Adrenal gland (tissue), 19 donors: ENCODE measurements at regions of chr7 and their contacts with region 1.

Region 1: DNA sequence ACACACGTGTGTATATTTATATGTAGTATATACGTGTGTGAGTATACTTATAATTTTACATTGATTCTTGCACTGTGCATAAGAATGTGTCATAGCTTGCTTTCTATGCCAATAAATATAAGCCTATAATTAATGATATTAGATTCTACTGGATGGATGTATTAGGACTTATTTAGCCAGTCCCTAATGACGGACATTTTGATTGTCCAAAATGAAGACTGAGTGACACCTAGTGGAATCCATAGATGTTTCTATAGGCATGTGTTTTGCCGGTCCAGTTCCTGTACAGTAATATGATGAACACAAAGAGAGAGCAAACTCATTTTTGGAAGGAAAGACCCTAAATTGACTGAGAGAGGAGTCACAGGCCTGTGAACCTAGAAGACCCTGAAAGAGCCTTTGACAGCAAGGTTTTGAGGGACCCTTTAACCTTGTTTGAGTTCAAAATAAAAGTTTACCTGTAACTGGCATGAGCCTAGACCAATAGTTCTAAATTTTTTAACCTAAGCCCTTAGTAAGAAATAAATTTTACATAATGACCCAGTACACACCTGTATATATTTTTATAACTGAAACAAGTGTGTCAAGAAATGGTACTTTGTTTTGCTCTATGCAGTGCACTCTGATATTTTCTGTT is 42.4 kb upstream of the AGBL3 start:
- DNase-seq: no peak
- H3K4me3 ChIP-seq: no peak overlapping the region
- H3K27ac ChIP-seq: no peak overlapping the region
- H3K4me1 ChIP-seq: no peaks in the 10 kb centered on the region
- H3K27me3 ChIP-seq: no peaks in the 10 kb centered on the region
- CTCF ChIP-seq: peak in 3 of 6 experiments; percentile 18 to 26 (median 20)
- POLR2A ChIP-seq: no peak

Region 2: GRCh38 chr7:134766779-134767519 is 176.9 kb before region 1 on chr7:
- intact Hi-C with region 1: loop called in 1 of 2 experiments (anchors 10 kb)
- DNase-seq: no peak
- H3K4me3 ChIP-seq: no peak overlapping the region
- H3K27ac ChIP-seq: peak overlapping the region in 3 of 5 donors; percentile 24 to 84 (median 61)
- H3K4me1 ChIP-seq: no peaks in the 10 kb centered on the region
- H3K27me3 ChIP-seq: no peaks in the 10 kb centered on the region
- CTCF ChIP-seq: no peak
- POLR2A ChIP-seq: no peak

Region 3: GRCh38 chr7:134782121-134782623 is 161.7 kb before region 1 on chr7:
- intact Hi-C with region 1: no loop called
- DNase-seq: no peak
- H3K4me3 ChIP-seq: peak overlapping the region in 1 of 4 donors; percentile 58
- H3K27ac ChIP-seq: peak overlapping the region in 3 of 5 donors; percentile 50 to 84 (median 71)
- H3K4me1 ChIP-seq: peaks cover 0 to 13% of the 10 kb centered on the region in 2 donors
- H3K27me3 ChIP-seq: no peaks in the 10 kb centered on the region
- CTCF ChIP-seq: no peak
- POLR2A ChIP-seq: no peak